Activated CD8-positive, alpha-beta T cell treated with anti-CD3 and anti-CD28 coated beads for 36 hours (primary cell): ENCODE measurements at regions of chr6 and their contacts with region 1.

Region 1: GRCh38 chr6:132768051-132768517 is 10.4 kb upstream of the VNN2 start:
- DNase-seq: peak; percentile 61
- ATAC-seq: peak; percentile 79
- H3K4me3 Mint-ChIP-seq: no peak overlapping the region
- H3K27ac Mint-ChIP-seq: no peak overlapping the region
- H3K4me1 Mint-ChIP-seq: peaks cover 19% of the 10 kb centered on the region
- H3K27me3 Mint-ChIP-seq: no peaks in the 10 kb centered on the region
- CTCF ChIP-seq: peak; percentile 72

Region 2: GRCh38 chr6:132530293-132530974 is 237.7 kb before region 1 on chr6:
- CTCF ChIA-PET with region 1: interaction called, 5 read pairs
- POLR2A ChIA-PET with region 1: no interaction called
- intact Hi-C with region 1: loop called (anchors 5 kb)
- DNase-seq: peak; percentile 72
- ATAC-seq: peak; percentile 75
- H3K4me3 Mint-ChIP-seq: peak overlapping the region; percentile 17
- H3K27ac Mint-ChIP-seq: no peak overlapping the region
- H3K4me1 Mint-ChIP-seq: no peaks in the 10 kb centered on the region
- H3K27me3 Mint-ChIP-seq: peaks cover 10% of the 10 kb centered on the region
- CTCF ChIP-seq: peak; percentile 80

Region 3: DNA sequence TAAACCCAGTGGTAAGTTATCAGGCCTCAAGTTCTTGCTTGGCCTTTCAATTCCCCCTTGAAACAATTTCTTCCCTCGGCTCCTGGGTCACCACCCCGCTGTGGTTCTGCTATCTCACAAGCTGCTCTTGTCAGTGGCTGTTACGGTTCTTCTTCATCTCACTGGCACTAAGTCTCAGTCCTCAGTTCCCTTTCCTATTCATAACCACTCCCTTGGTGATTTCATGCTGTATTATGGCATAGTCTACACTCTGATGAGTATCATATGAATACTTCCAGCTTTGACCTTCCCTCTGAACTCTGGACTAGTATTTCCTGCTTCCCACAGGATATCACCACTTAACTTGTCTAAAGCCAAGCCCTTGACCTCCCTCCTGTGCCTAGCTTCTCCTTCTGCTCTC is 117.0 kb before region 1 on chr6:
- CTCF ChIA-PET with region 1: no interaction called
- POLR2A ChIA-PET with region 1: no interaction called
- intact Hi-C with region 1: no loop called
- DNase-seq: no peak
- ATAC-seq: no peak
- H3K4me3 Mint-ChIP-seq: no peak overlapping the region
- H3K27ac Mint-ChIP-seq: no peak overlapping the region
- H3K4me1 Mint-ChIP-seq: peaks cover 4% of the 10 kb centered on the region
- H3K27me3 Mint-ChIP-seq: peaks cover 3% of the 10 kb centered on the region
- CTCF ChIP-seq: no peak

Region 4: DNA sequence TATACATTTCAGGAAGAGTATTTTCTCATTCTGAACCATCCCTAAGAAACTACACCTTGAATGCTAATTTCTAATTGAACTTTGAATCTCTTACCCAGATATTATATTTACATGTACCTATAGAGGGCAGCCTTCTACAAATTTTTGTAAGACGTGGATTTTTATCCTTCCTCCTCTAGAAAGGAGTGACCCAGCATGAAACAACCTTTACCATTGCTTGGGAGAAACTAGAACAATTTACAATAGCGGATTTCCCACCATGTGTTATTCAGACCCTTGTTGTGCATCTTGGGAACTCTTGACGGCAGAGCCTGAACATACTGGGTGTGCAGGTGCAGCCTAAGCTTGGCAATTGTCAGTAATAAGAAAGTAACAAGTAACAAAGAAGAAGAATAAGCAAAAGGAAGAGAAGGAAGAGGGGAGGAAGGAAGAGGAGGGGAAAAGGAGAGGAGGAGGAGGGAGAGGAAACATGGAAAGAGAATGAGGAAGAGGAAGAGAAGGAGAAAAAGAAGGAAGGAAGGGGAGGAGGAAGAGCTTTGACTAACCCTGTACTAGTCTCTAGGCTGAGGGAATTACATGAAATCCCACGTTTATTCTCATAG is 98.3 kb before region 1 on chr6:
- CTCF ChIA-PET with region 1: interaction called, 69 read pairs
- POLR2A ChIA-PET with region 1: interaction called, 4 read pairs
- intact Hi-C with region 1: loop called (anchors 1 kb)
- DNase-seq: no peak
- ATAC-seq: peak; percentile 60
- H3K4me3 Mint-ChIP-seq: no peak overlapping the region
- H3K27ac Mint-ChIP-seq: no peak overlapping the region
- H3K4me1 Mint-ChIP-seq: peaks cover 2% of the 10 kb centered on the region
- H3K27me3 Mint-ChIP-seq: peaks cover 6% of the 10 kb centered on the region
- CTCF ChIP-seq: peak; percentile 72

Region 5: DNA sequence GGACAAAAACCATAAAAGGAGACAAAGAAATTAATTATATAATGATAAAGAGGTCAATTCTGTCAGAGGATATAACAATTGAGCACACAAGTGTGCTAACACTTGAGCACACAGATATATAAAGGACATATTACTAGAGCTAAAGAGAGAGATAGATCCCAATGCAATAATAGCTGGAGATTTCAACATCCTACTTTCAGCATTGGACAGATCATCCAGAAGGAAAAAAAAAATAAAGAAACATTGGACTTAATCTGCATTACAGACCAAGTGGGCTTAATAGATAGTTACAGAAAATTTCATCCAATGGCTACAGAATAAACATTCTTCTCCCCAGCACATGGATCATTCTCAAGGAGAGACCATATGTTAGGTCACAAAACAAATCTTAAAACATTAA is 64.1 kb before region 1 on chr6:
- CTCF ChIA-PET with region 1: no interaction called
- POLR2A ChIA-PET with region 1: no interaction called
- intact Hi-C with region 1: no loop called
- DNase-seq: no peak
- ATAC-seq: no peak
- H3K4me3 Mint-ChIP-seq: no peak overlapping the region
- H3K27ac Mint-ChIP-seq: no peak overlapping the region
- H3K4me1 Mint-ChIP-seq: no peaks in the 10 kb centered on the region
- H3K27me3 Mint-ChIP-seq: peaks cover 27% of the 10 kb centered on the region
- CTCF ChIP-seq: no peak

Region 6: DNA sequence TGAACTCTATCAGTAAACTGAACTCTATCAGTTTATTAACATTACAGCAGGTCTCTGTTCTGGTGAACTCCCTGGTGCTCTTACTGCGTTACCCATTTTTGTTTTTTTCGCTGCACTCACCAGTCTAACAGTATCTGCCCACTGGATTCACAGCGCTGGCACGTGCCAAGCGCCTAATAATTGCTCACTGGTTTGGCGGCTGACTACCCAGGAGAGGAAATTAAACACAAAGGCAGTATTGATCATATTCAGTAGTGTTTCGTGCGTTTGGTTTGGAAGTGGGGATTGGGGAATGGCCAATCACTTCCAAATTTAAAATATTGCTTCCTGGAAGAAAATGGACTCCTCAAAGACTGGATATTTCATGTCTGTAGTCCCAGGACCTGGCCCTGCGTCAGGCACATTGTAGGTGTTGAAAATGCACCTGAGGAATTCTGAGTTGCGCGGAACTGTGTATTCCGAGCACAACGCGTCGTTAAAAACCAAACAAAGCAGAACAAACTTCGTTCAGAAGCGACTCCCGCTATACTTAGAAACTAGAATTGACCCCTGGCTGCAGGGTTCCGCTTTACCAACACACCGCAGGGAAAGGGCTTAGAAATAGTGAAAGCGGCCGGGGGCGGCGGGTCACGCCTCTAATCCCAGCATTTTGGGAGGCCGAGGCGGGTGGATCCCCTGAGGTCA is 45.2 kb after region 1 on chr6:
- CTCF ChIA-PET with region 1: interaction called, 3 read pairs
- POLR2A ChIA-PET with region 1: interaction called, 31 read pairs
- intact Hi-C with region 1: no loop called
- DNase-seq: peak; percentile 70
- ATAC-seq: peak; percentile 7
- H3K4me3 Mint-ChIP-seq: peak overlapping the region; percentile 98
- H3K27ac Mint-ChIP-seq: peak overlapping the region; percentile 99
- H3K4me1 Mint-ChIP-seq: peaks cover 22% of the 10 kb centered on the region
- H3K27me3 Mint-ChIP-seq: no peaks in the 10 kb centered on the region
- CTCF ChIP-seq: no peak